CD4-positive, alpha-beta memory T cell (primary cell): ENCODE measurements at regions of chr14 and their contacts with region 1.

Region 1: GRCh38 chr14:93115069-93115820 is 480 bp downstream of the ITPK1 start:
- DNase-seq: peak; percentile 80 to 89 (median 87)
- H3K4me3 ChIP-seq: peak overlapping the region in 1 of 2 donors; percentile 72
- H3K4me3 Mint-ChIP-seq: peak overlapping the region; percentile 51 to 92 (median 88)
- H3K27ac ChIP-seq: peak overlapping the region; percentile 64
- H3K27ac Mint-ChIP-seq: peak overlapping the region in 4 of 7 donors; percentile 66 to 90 (median 78)
- H3K4me1 ChIP-seq: peaks cover 38% of the 10 kb centered on the region
- H3K4me1 Mint-ChIP-seq: peaks cover 19 to 29% (median 21%) of the 10 kb centered on the region in 4 donors
- H3K27me3 ChIP-seq: no peaks in the 10 kb centered on the region
- H3K27me3 Mint-ChIP-seq: no peaks in the 10 kb centered on the region

Region 2: DNA sequence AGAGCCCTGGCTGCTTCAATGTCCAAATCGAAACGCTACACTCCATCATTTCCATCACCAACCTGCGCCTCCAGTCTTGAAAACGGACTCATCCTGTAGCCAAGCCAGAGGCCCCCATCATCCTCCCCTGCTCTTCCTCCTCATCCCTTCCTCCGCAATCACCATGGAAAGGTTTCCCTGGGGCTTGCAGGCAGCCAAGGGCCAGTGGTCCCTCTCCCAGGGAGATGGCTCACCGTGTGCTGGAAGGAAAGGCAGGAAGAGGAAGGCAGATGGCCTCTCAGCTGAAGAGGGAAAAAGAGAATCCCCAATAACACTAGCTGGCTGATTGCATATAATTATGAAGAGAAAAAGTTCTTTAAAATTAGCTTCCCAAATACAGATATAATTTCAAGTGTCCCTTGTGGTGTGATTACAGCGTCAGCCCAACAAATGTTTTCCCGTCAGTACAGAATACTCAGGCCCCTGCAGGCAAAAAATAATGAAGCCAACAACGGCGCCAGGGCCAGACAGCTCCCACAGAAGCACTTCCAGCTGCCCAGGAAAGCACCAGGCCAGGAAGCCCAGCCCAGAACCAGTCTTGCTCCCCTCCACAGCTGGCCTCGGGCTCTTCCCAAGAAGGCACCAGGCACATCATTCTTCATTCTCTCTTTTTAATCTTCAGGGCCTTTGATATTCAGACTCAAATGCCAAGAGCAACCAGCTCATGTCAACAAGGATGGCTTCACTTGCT is 24.3 kb before region 1 on chr14:
- CTCF ChIA-PET with region 1: interaction called, 129 read pairs
- POLR2A ChIA-PET with region 1: no interaction called
- intact Hi-C with region 1: no loop called
- DNase-seq: no peak
- H3K4me3 ChIP-seq: no peak overlapping the region
- H3K4me3 Mint-ChIP-seq: no peak overlapping the region
- H3K27ac ChIP-seq: no peak overlapping the region
- H3K27ac Mint-ChIP-seq: peak overlapping the region in 5 of 7 donors; percentile 22 to 72 (median 46)
- H3K4me1 ChIP-seq: no peaks in the 10 kb centered on the region
- H3K4me1 Mint-ChIP-seq: peaks cover 13 to 34% (median 16%) of the 10 kb centered on the region in 4 donors
- H3K27me3 ChIP-seq: no peaks in the 10 kb centered on the region
- H3K27me3 Mint-ChIP-seq: no peaks in the 10 kb centered on the region

Region 3: DNA sequence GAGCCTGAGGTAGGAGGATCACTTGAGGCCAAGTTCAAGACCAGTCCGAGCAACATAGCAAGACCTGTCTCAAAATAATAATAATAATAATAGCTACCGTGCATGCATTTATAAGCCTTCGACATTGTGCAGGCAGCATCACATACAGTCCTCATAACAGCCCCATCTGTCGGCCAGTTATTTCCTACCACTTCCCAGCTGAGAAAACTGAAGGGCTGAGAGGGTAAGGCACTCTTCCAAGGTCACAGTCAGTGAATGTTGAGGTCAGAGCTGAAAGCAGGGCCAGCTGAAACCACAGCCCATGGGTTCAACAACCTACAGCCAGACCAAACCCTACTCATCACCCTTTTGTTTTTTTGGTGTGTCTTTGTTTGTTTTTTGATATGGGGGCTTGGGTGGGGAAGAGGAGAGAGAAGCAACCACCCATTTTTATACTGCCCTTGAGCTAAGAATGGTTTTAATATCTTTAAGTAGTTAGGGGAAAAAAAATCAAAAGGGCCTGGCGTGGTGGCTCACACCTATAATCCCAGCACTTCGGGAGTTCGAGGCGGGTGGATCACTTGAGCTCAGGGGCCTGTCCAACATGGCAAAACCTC is 17.3 kb after region 1 on chr14:
- CTCF ChIA-PET with region 1: interaction called, 105 read pairs
- POLR2A ChIA-PET with region 1: interaction called, 11 read pairs
- intact Hi-C with region 1: loop called (anchors 1 kb)
- DNase-seq: peak in 2 of 5 donors; percentile 19 to 22
- H3K4me3 ChIP-seq: no peak overlapping the region
- H3K4me3 Mint-ChIP-seq: no peak overlapping the region
- H3K27ac ChIP-seq: no peak overlapping the region
- H3K27ac Mint-ChIP-seq: no peak overlapping the region
- H3K4me1 ChIP-seq: no peaks in the 10 kb centered on the region
- H3K4me1 Mint-ChIP-seq: no peaks in the 10 kb centered on the region
- H3K27me3 ChIP-seq: no peaks in the 10 kb centered on the region
- H3K27me3 Mint-ChIP-seq: no peaks in the 10 kb centered on the region

Region 4: DNA sequence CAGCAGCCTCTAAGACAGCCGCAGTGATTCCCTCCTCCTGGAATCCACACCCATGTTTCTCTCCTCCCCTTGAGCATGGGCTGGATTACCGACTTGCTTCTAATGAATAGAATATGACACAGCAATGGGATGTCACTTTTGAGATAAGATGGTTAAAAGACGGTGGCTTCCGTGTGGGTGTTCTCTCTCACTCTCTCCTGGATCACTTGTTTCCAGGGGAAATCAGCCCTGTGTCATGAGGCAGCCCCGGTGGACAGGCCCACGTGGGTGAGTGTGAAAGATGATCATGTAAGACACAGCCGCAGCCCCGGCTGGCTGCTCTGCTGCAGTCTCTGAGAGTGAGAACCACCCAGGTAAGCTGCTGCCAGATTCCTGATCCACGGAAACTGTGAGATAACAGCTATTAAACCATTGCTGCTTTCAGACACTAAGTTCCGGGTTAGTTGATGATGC is 58.7 kb after region 1 on chr14:
- CTCF ChIA-PET with region 1: interaction called, 32 read pairs
- POLR2A ChIA-PET with region 1: interaction called, 7 read pairs
- intact Hi-C with region 1: loop called (anchors 1 kb)
- DNase-seq: no peak
- H3K4me3 ChIP-seq: no peak overlapping the region
- H3K4me3 Mint-ChIP-seq: no peak overlapping the region
- H3K27ac ChIP-seq: no peak overlapping the region
- H3K27ac Mint-ChIP-seq: no peak overlapping the region
- H3K4me1 ChIP-seq: no peaks in the 10 kb centered on the region
- H3K4me1 Mint-ChIP-seq: peaks cover 0 to 6% (median 4%) of the 10 kb centered on the region in 4 donors
- H3K27me3 ChIP-seq: no peaks in the 10 kb centered on the region
- H3K27me3 Mint-ChIP-seq: no peaks in the 10 kb centered on the region

Region 5: GRCh38 chr14:93219103-93219726 is 104.0 kb after region 1 on chr14:
- CTCF ChIA-PET with region 1: interaction called, 56 read pairs
- POLR2A ChIA-PET with region 1: interaction called, 4 read pairs
- intact Hi-C with region 1: loop called (anchors 1 kb)
- DNase-seq: peak; percentile 43 to 69 (median 52)
- H3K4me3 ChIP-seq: no peak overlapping the region
- H3K4me3 Mint-ChIP-seq: no peak overlapping the region
- H3K27ac ChIP-seq: no peak overlapping the region
- H3K27ac Mint-ChIP-seq: no peak overlapping the region
- H3K4me1 ChIP-seq: no peaks in the 10 kb centered on the region
- H3K4me1 Mint-ChIP-seq: peaks cover 0 to 2% (median 0%) of the 10 kb centered on the region in 4 donors
- H3K27me3 ChIP-seq: no peaks in the 10 kb centered on the region
- H3K27me3 Mint-ChIP-seq: no peaks in the 10 kb centered on the region

Region 6: GRCh38 chr14:93527068-93527668 is 411.9 kb after region 1 on chr14:
- CTCF ChIA-PET with region 1: no interaction called
- POLR2A ChIA-PET with region 1: no interaction called
- intact Hi-C with region 1: no loop called
- DNase-seq: no peak
- H3K4me3 ChIP-seq: no peak overlapping the region
- H3K4me3 Mint-ChIP-seq: no peak overlapping the region
- H3K27ac ChIP-seq: no peak overlapping the region
- H3K27ac Mint-ChIP-seq: no peak overlapping the region
- H3K4me1 ChIP-seq: no peaks in the 10 kb centered on the region
- H3K4me1 Mint-ChIP-seq: no peaks in the 10 kb centered on the region
- H3K27me3 ChIP-seq: no peaks in the 10 kb centered on the region
- H3K27me3 Mint-ChIP-seq: peaks cover 4 to 9% of the 10 kb centered on the region in 2 donors